ENCODE measurements at regions of chr12 and their contacts with region 1.

Region 1: DNA sequence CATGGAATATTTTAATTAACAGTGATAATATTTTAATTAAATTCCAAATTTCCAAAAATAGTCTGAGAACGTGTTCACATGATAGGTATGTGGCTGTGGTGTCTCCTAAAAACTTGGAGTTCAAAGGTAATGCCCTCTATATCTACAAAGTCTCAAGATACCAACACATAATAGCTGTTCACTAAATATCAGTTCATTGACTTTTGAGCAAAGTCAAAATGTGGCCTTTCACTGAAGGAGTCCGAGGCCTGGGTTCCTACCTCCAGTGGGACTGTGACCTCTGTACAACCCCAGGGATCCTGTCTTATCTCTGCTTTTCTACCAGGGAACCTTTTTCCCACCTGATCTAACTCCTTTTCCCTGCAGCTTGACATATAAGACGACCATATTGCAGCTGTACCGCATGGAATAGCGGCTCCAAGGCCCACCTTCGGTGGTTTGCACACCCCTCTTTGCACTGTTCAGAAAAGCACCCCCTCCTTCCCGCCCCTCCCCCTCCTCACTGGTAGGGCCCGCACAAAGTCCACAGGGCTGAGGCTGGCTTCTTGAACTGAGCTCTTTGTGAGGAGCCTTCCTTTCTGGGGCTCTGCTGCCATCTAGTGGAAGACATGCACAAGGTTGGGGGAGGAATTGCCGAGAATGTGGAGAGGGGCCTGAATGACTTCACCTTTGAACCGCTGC is 3.1 kb downstream of the CCND2 start:
- DNase-seq: peak; percentile 62 to 95 (median 86)
- ATAC-seq: peak; percentile 28 to 35
- H3K4me3 Mint-ChIP-seq: peak overlapping the region; percentile 59 to 99 (median 95)
- H3K27ac Mint-ChIP-seq: peak overlapping the region; percentile 61 to 99 (median 94)
- H3K4me1 Mint-ChIP-seq: peaks cover 27 to 63% (median 60%) of the 10 kb centered on the region in 4 donors
- H3K27me3 Mint-ChIP-seq: no peaks in the 10 kb centered on the region

Region 2: DNA sequence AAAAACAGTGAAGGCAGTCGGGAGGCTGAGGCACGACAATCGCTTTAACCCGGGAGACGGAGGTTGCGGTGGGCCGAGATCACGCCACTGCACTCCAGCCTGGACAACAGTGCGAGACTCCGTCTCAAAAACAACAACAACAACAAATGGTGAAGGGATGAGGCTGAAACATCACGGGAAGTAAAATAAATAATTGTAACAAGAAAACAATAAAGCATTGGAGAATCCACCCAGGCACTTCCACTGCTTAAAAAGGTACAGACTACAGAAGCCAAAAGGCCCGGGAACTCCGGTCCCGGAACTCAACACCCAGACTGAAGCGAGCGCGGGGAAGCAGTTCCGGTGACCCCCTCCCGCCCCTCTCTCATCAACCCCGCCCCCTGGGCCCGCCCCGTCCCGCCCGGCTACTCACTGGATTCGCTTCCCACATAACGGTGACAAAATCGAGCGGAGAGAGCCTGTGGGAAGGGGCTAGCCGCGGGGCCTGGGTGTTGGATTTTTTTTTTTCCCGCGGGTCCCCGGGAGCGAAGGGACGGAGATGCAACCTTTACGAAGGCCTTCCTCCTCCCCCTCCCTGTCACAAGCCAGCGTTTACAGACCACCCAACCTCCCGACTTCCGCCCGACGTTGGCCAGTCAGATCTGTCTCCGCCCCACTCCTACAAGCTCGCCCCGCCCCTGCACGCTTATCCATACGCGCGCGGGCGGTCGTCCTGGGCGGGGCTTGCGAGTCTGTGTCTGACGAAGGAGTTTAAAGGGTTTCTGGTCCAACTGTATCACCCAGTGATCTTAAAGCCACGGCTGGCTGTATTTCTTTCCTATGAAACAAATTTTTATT is 403.6 kb before region 1 on chr12 and contains the start of gene PARP11:
- POLR2A ChIA-PET with region 1: interaction called, 16 read pairs
- DNase-seq: peak; percentile 96 to 99 (median 97)
- ATAC-seq: peak; percentile 95 to 96
- H3K4me3 Mint-ChIP-seq: peak within 1 kb of the TSS; percentile 91 to 99 (median 96)
- H3K27ac Mint-ChIP-seq: peak within 1 kb of the TSS; percentile 96 to 99 (median 98)
- H3K4me1 Mint-ChIP-seq: peaks cover 22 to 54% (median 50%) of the 10 kb centered on the region in 4 donors
- H3K27me3 Mint-ChIP-seq: no peaks in the 10 kb centered on the region
- polyA plus RNA-seq, gene PARP11: 6.4 to 8.7 (median 7.9) TPM

Region 3: GRCh38 chr12:3885277-3886094 is 391.2 kb before region 1 on chr12:
- POLR2A ChIA-PET with region 1: interaction called, 32 read pairs
- DNase-seq: peak in 8 of 10 donors; percentile 12 to 76 (median 58)
- ATAC-seq: peak in 1 of 2 donors; percentile 44
- H3K4me3 Mint-ChIP-seq: peak overlapping the region in 1 of 10 donors; percentile 5
- H3K27ac Mint-ChIP-seq: peak overlapping the region in 8 of 10 donors; percentile 9 to 65 (median 14)
- H3K4me1 Mint-ChIP-seq: peaks cover 4 to 13% (median 6%) of the 10 kb centered on the region in 4 donors
- H3K27me3 Mint-ChIP-seq: peaks cover 0 to 3% (median 0%) of the 10 kb centered on the region in 5 donors

Region 4: GRCh38 chr12:3988519-3989448 is 287.9 kb before region 1 on chr12:
- POLR2A ChIA-PET with region 1: interaction called, 42 read pairs
- DNase-seq: peak in 7 of 10 donors; percentile 21 to 73 (median 44)
- ATAC-seq: peak; percentile 92 to 93
- H3K4me3 Mint-ChIP-seq: peak overlapping the region; percentile 42 to 80 (median 66)
- H3K27ac Mint-ChIP-seq: peak overlapping the region; percentile 80 to 96 (median 91)
- H3K4me1 Mint-ChIP-seq: peaks cover 14 to 39% (median 33%) of the 10 kb centered on the region in 4 donors
- H3K27me3 Mint-ChIP-seq: no peaks in the 10 kb centered on the region

Region 5: DNA sequence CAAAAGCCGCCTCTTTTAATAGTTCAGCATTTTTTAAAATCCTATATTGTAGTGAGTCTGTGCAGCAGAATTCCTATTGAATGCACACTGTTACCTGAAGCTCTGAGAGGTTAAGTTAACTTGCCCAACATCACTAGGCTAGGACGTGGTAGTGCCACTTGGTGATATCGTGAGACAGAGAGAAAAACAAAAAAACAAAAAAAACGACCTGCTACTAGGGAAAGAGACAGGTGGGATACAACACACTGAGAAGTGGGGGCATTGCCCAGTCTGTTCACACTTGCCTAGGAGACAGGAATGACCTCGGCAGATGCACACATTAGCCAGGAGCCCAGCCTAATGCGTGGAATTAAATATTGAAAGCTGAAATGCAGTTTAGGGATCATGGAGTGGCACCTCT is 132.8 kb before region 1 on chr12:
- POLR2A ChIA-PET with region 1: interaction called, 53 read pairs
- DNase-seq: peak in 4 of 10 donors; percentile 12 to 39 (median 17)
- ATAC-seq: peak; percentile 34 to 65
- H3K4me3 Mint-ChIP-seq: peak overlapping the region in 8 of 10 donors; percentile 10 to 91 (median 52)
- H3K27ac Mint-ChIP-seq: peak overlapping the region in 9 of 10 donors; percentile 36 to 99 (median 81)
- H3K4me1 Mint-ChIP-seq: peaks cover 6 to 78% (median 32%) of the 10 kb centered on the region in 4 donors
- H3K27me3 Mint-ChIP-seq: no peaks in the 10 kb centered on the region

Region 6: DNA sequence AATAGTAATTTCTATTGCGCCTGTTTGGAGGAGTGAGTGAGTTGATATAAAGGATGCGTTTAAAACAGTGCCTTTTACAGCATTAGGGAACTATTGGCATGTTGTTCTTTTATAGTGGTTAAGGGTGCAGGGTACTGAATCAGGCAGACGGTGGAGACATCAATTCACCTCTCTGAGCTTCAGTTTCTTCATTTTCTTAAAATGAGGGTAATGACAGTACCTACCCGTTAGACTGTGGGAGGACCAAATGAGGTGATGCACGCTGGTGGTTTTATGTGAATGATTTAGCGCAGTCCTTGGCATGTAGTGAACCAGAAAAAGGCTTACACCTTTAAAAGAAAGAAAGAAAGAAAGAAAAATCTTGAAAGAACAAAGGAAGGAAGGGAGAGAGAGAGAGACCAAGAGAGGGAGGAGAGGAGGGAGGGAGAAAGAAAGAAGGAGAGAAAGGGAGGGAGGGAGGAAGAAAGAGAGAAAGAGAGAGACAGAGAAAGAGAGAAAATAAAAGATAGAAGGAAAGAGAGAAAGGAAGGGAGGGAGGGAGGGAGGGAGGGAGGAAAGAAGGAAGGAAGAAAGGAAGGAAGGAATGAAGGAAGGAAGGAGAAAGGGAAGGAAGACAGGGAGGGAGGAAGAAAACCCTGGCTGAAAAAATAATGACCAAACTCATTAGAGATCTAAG is 25.3 kb before region 1 on chr12:
- POLR2A ChIA-PET with region 1: interaction called, 30 read pairs
- DNase-seq: peak in 7 of 10 donors; percentile 25 to 60 (median 38)
- ATAC-seq: peak; percentile 99
- H3K4me3 Mint-ChIP-seq: peak overlapping the region in 4 of 10 donors; percentile 36 to 71 (median 55)
- H3K27ac Mint-ChIP-seq: peak overlapping the region in 9 of 10 donors; percentile 11 to 87 (median 44)
- H3K4me1 Mint-ChIP-seq: peaks cover 8 to 12% (median 11%) of the 10 kb centered on the region in 4 donors
- H3K27me3 Mint-ChIP-seq: peaks cover 0 to 7% (median 0%) of the 10 kb centered on the region in 5 donors

Region 7: DNA sequence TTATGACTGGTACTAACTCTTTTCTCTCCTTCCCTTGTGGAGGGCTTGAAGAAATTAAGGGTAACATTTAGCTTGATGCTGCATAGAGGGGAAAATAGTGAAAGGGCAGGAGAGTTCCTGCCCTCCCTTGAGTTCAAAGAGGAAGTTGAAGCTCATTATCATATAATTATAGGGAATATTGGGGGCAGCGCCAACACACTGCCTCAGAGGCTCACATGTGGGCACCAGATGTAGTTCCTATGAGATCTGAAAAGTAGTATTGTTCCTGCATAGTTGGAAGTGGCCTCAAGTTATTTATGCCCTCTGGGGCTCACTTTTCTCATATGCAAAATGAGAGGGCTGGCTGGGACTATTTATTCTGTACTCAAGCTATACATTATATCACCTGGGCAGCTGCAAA is 135.8 kb after region 1 on chr12:
- POLR2A ChIA-PET with region 1: no interaction called
- DNase-seq: no peak
- ATAC-seq: no peak
- H3K4me3 Mint-ChIP-seq: no peak overlapping the region
- H3K27ac Mint-ChIP-seq: no peak overlapping the region
- H3K4me1 Mint-ChIP-seq: peaks cover 0 to 4% (median 2%) of the 10 kb centered on the region in 4 donors
- H3K27me3 Mint-ChIP-seq: peaks cover 4 to 11% (median 9%) of the 10 kb centered on the region in 5 donors